SK-N-SH (cell line): ENCODE measurements at regions of chr19 and their contacts with region 1.

Region 1: GRCh38 chr19:7494416-7495098 is 5.7 kb upstream of the PEX11G start:
- DNase-seq: peak; percentile 83
- H3K4me3 ChIP-seq: no peak overlapping the region
- H3K27ac ChIP-seq: peak overlapping the region in 1 of 2 experiments; percentile 93; a peak in 2 of 4 replicates
- H3K4me1 ChIP-seq: peaks cover 0 to 11% of the 10 kb centered on the region in 2 experiments; a peak in 1 of 4 replicates
- H3K27me3 ChIP-seq: 0 out of 2 replicates have a peak, but pooled peaks cover 6% of the 10 kb centered on the region
- CTCF ChIP-seq: no peak
- EP300 ChIP-seq: peak in 1 of 2 experiments; percentile 44; a peak in 1 of 4 replicates
- RAD21 ChIP-seq: peak; percentile 55

Region 2: DNA sequence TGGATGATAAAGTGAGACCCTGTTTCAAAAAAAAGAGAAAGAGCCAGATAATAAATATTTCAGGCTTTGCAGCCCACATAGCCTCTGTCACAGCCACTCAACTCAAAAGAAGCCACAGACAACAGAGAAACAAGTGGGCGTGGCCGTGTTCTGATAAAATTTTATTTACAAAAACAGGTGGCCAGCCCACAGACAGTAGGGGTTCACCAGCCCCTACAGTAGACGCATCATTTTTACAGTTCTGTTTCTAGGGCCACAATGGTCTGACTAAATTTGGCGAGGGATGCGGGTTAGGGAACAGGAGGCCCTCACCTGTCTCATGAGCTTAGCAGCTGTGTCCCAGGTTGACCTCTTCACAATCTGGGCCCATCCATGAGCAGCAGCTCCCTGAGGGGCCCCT is 86.3 kb before region 1 on chr19:
- CTCF ChIA-PET with region 1: no interaction called
- POLR2A ChIA-PET with region 1: no interaction called
- DNase-seq: no peak
- H3K4me3 ChIP-seq: no peak overlapping the region
- H3K27ac ChIP-seq: no peak overlapping the region
- H3K4me1 ChIP-seq: no peaks in the 10 kb centered on the region
- H3K27me3 ChIP-seq: no peaks in the 10 kb centered on the region
- CTCF ChIP-seq: no peak
- EP300 ChIP-seq: no peak
- RAD21 ChIP-seq: no peak

Region 3: DNA sequence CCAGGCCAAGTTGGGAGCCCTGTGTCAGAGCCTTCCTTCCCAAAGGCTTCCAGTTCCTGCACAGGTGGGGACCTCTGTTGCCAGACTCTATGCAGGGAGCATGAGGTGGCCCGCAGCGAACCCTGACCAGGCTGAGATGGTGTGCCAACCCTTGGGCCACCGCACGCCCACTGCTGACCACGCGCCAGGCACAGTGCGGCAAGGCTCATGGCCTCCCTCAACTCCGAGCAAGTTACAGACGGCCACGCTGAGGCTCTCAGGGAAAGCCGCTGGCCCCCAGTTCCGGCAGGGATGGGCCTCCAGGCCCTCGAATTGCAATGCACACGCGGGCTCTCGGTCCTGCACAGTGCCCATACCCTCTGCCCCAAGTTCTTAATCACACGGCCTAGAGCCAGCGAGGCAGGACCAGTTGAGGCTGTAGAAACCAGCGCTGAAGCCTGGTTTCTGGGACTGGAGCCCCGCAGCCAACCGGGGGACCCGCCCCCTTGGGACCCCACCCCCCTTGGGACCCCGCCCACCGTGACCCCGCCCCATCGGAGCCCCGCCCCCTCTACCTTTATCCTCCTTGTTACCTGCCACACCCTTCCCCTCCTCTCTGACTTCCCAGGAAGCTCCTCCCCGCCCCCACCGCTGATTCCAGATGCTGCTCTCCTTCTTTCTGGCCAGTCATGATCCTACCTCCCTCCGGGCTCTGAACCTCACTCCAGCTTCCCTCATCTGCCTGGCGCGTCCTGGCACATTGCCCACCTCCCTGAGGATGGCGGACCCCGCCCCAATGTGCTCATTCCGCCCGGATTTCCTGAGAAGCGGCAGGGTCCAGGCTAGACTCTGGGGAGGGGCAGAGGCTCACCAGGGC is 11.7 kb before region 1 on chr19:
- CTCF ChIA-PET with region 1: interaction called, 4 read pairs
- POLR2A ChIA-PET with region 1: interaction called, 14 read pairs
- DNase-seq: peak; percentile 91
- H3K4me3 ChIP-seq: no peak overlapping the region
- H3K27ac ChIP-seq: peak overlapping the region in 1 of 2 experiments; percentile 90; a peak in 2 of 4 replicates
- H3K4me1 ChIP-seq: peaks cover 0 to 29% of the 10 kb centered on the region in 2 experiments; a peak in 1 of 4 replicates
- H3K27me3 ChIP-seq: no peaks in the 10 kb centered on the region
- CTCF ChIP-seq: no peak
- EP300 ChIP-seq: no peak
- RAD21 ChIP-seq: no peak

Region 4: DNA sequence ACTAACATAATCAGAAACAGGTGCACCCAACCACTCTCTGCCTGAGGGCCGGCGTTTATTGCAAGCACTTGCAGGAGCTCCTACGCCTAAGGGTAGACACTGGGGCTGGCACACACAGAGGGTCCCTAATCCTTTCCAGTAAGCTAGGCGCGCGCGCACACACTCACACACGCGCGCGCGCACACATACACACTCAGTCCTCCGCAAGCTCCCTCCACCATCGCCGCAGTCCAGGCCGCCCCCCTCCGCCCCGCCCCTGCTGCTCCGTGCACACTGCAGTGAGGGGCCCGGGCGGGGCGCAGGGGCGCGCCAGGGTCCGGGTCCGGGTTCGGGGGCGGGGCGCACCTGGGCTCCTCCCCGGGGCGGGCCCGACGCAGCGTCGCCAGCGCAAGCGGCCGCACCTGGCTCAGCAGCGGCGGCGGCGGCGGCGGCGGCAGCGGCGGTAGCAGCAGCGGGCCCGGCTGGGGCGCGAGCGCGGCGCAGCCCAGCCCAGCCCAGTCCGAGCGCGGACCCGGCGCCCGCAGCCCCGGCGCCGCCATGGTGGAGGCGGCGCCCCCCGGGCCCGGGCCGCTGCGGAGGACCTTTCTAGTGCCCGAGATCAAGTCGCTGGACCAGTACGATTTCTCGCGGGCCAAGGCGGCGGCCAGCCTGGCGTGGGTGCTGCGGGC is 101.0 kb after region 1 on chr19 and contains the start of gene CAMSAP3:
- CTCF ChIA-PET with region 1: no interaction called
- POLR2A ChIA-PET with region 1: no interaction called
- DNase-seq: peak; percentile 90
- H3K4me3 ChIP-seq: peak within 1 kb of the TSS; percentile 47 to 48; a peak in 3 of 4 replicates
- H3K27ac ChIP-seq: no peak within 1 kb of the TSS; a peak in 1 of 4 replicates
- H3K4me1 ChIP-seq: peaks cover 0 to 8% of the 10 kb centered on the region in 2 experiments; a peak in 1 of 4 replicates
- H3K27me3 ChIP-seq: peaks cover 23% of the 10 kb centered on the region
- CTCF ChIP-seq: no peak
- EP300 ChIP-seq: peak in 1 of 2 experiments; percentile 34; a peak in 1 of 4 replicates
- RAD21 ChIP-seq: no peak; the same call in 1 of the 2 replicates
- polyA plus RNA-seq, gene CAMSAP3: 0.05 and 0.08 TPM in 2 replicates